A673 (cell line): ENCODE measurements at regions of chr15 and their contacts with region 1.

Region 1: GRCh38 chr15:54660356-54660755 is 536.4 kb downstream of the RSL24D1 start:
- DNase-seq: no peak
- H3K4me3 ChIP-seq: no peak overlapping the region
- H3K27ac ChIP-seq: no peak overlapping the region
- H3K4me1 ChIP-seq: no peaks in the 10 kb centered on the region
- H3K27me3 ChIP-seq: no peaks in the 10 kb centered on the region
- CTCF ChIP-seq: no peak

Region 2: DNA sequence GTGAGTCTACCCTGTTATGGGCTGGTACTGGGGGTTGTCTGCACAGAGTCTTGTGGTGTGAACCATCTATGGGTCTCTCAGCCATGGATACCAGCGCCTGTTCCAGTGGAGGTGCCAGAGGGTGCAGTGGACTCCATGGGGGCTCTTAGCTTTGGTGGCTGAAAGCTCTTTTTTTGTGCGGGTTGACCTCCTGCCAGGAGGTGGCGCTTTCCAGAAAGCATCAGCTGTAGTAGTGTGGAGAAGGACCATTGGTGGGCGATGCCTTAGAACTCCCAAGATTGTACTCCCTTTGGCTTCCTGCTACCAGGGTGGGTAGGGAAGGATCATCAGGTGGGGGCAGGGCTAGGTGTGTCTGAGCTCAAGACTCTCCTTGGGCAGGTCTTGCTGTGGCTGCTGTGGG is 66.2 kb before region 1 on chr15:
- CTCF ChIA-PET with region 1: no interaction called
- POLR2A ChIA-PET with region 1: no interaction called
- intact Hi-C with region 1: no loop called
- DNase-seq: peak; percentile 2
- H3K4me3 ChIP-seq: no peak overlapping the region
- H3K27ac ChIP-seq: no peak overlapping the region
- H3K4me1 ChIP-seq: no peaks in the 10 kb centered on the region
- H3K27me3 ChIP-seq: no peaks in the 10 kb centered on the region
- CTCF ChIP-seq: no peak

Region 3: GRCh38 chr15:54681584-54681983 is 21.2 kb after region 1 on chr15:
- CTCF ChIA-PET with region 1: no interaction called
- POLR2A ChIA-PET with region 1: interaction called, 17 read pairs
- intact Hi-C with region 1: no loop called
- DNase-seq: no peak
- H3K4me3 ChIP-seq: no peak overlapping the region
- H3K27ac ChIP-seq: no peak overlapping the region
- H3K4me1 ChIP-seq: no peaks in the 10 kb centered on the region
- H3K27me3 ChIP-seq: no peaks in the 10 kb centered on the region
- CTCF ChIP-seq: no peak